ENCODE measurements at regions of chr11 and their contacts with region 1.

Region 1: GRCh38 chr11:11243590-11244469 is 109.2 kb downstream of the CSNK2A3 start:
- DNase-seq: no peak
- ATAC-seq: peak; percentile 76
- H3K4me3 ChIP-seq: no peak overlapping the region
- H3K27ac ChIP-seq: no peak overlapping the region
- H3K4me1 ChIP-seq: peaks cover 13% of the 10 kb centered on the region; the same call in 1 of the 2 replicates
- H3K27me3 ChIP-seq: no peaks in the 10 kb centered on the region
- CTCF ChIP-seq: no peak
- EP300 ChIP-seq: no peak
- POLR2A ChIP-seq: no peak
- RAD21 ChIP-seq: no peak

Region 2: GRCh38 chr11:11230802-11231562 is 12.8 kb before region 1 on chr11:
- CTCF ChIA-PET with region 1: interaction called, 24 read pairs
- POLR2A ChIA-PET with region 1: interaction called, 4 read pairs
- RAD21 ChIA-PET with region 1: interaction called, 15 read pairs
- SMC1A ChIA-PET with region 1: interaction called, 23 read pairs
- in situ Hi-C with region 1: no loop called
- intact Hi-C with region 1: no loop called
- DNase-seq: peak; percentile 59
- ATAC-seq: peak; percentile 81
- H3K4me3 ChIP-seq: no peak overlapping the region
- H3K27ac ChIP-seq: no peak overlapping the region
- H3K4me1 ChIP-seq: no peaks in the 10 kb centered on the region; the same call in 1 of the 2 replicates
- H3K27me3 ChIP-seq: no peaks in the 10 kb centered on the region; a peak in 1 of 4 replicates
- CTCF ChIP-seq: peak; percentile 26 to 60 (median 57)
- EP300 ChIP-seq: no peak
- POLR2A ChIP-seq: no peak
- RAD21 ChIP-seq: peak; percentile 37